ENCODE measurements at regions of chr10 and their contacts with region 1.

Region 1: GRCh38 chr10:4849555-4850242 is 23.7 kb downstream of the AKR1E2 start:
- DNase-seq: peak; percentile 98
- H3K4me3 ChIP-seq: no peak overlapping the region
- H3K27ac ChIP-seq: no peak overlapping the region
- H3K4me1 ChIP-seq: peaks cover 22% of the 10 kb centered on the region
- H3K27me3 ChIP-seq: no peaks in the 10 kb centered on the region
- CTCF ChIP-seq: peak; percentile 95 to 100
- POLR2A ChIP-seq: no peak

Region 2: GRCh38 chr10:4541292-4541691 is 308.4 kb before region 1 on chr10:
- CTCF ChIA-PET with region 1: no interaction called
- POLR2A ChIA-PET with region 1: no interaction called
- dilution Hi-C with region 1: no loop called
- intact Hi-C with region 1: no loop called
- DNase-seq: peak; percentile 94
- H3K4me3 ChIP-seq: no peak overlapping the region
- H3K27ac ChIP-seq: peak overlapping the region; percentile 93
- H3K4me1 ChIP-seq: peaks cover 10% of the 10 kb centered on the region
- H3K27me3 ChIP-seq: no peaks in the 10 kb centered on the region
- CTCF ChIP-seq: peak in 1 of 2 donors; percentile 18
- POLR2A ChIP-seq: no peak

Region 3: GRCh38 chr10:4813023-4813422 is 36.7 kb before region 1 on chr10:
- CTCF ChIA-PET with region 1: interaction called, 17 read pairs
- POLR2A ChIA-PET with region 1: no interaction called
- dilution Hi-C with region 1: no loop called
- intact Hi-C with region 1: loop called (anchors 1 kb)
- DNase-seq: peak; percentile 22
- H3K4me3 ChIP-seq: no peak overlapping the region
- H3K27ac ChIP-seq: no peak overlapping the region
- H3K4me1 ChIP-seq: peaks cover 31% of the 10 kb centered on the region
- H3K27me3 ChIP-seq: peaks cover 0 to 2% of the 10 kb centered on the region in 2 experiments
- CTCF ChIP-seq: no peak
- POLR2A ChIP-seq: no peak

Region 4: GRCh38 chr10:4889959-4890358 is 40.3 kb after region 1 on chr10:
- CTCF ChIA-PET with region 1: interaction called, 10 read pairs
- POLR2A ChIA-PET with region 1: no interaction called
- dilution Hi-C with region 1: no loop called
- intact Hi-C with region 1: no loop called
- DNase-seq: no peak
- H3K4me3 ChIP-seq: no peak overlapping the region
- H3K27ac ChIP-seq: no peak overlapping the region
- H3K4me1 ChIP-seq: no peaks in the 10 kb centered on the region
- H3K27me3 ChIP-seq: no peaks in the 10 kb centered on the region
- CTCF ChIP-seq: no peak
- POLR2A ChIP-seq: no peak

Region 5: GRCh38 chr10:5094265-5095205 is 244.8 kb after region 1 on chr10 and contains the start of gene AKR1C3:
- CTCF ChIA-PET with region 1: interaction called, 83 read pairs
- POLR2A ChIA-PET with region 1: no interaction called
- dilution Hi-C with region 1: no loop called
- intact Hi-C with region 1: loop called (anchors 1 kb)
- DNase-seq: peak; percentile 83
- H3K4me3 ChIP-seq: peak within 1 kb of the TSS; percentile 52 to 87 (median 56)
- H3K27ac ChIP-seq: peak within 1 kb of the TSS; percentile 28
- H3K4me1 ChIP-seq: peaks cover 7% of the 10 kb centered on the region
- H3K27me3 ChIP-seq: no peaks in the 10 kb centered on the region
- CTCF ChIP-seq: peak; percentile 43 to 53
- POLR2A ChIP-seq: no peak
- total RNA-seq, gene AKR1C3: 4.8 and 32.2 TPM in 2 replicates

Region 6: DNA sequence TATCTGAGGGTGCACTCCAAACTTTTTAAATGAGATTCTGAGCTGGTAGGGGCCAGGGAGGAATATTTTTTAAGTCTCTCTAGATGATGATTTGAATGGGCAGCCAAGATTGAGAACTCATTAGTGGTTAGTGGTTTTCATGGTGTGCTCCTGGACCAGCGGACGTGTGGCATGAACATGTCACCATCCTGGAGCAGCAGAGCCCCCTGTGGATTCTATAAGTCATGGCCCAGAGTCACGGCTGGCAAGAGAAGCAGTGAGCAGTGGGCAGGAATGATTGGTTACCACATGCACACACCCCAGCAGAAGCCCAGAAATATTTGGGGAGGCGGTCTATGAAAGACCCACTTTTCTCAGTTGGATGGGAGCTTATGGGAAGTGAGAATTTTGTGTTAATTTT is 493.9 kb after region 1 on chr10:
- CTCF ChIA-PET with region 1: interaction called, 13 read pairs
- POLR2A ChIA-PET with region 1: no interaction called
- dilution Hi-C with region 1: no loop called
- intact Hi-C with region 1: loop called (anchors 1 kb)
- DNase-seq: no peak
- H3K4me3 ChIP-seq: no peak overlapping the region
- H3K27ac ChIP-seq: no peak overlapping the region
- H3K4me1 ChIP-seq: no peaks in the 10 kb centered on the region
- H3K27me3 ChIP-seq: no peaks in the 10 kb centered on the region
- CTCF ChIP-seq: no peak
- POLR2A ChIP-seq: no peak

Region 7: GRCh38 chr10:5434017-5434753 is 584.5 kb after region 1 on chr10:
- CTCF ChIA-PET with region 1: interaction called, 97 read pairs
- POLR2A ChIA-PET with region 1: no interaction called
- dilution Hi-C with region 1: no loop called
- intact Hi-C with region 1: loop called (anchors 1 kb)
- DNase-seq: peak; percentile 67
- H3K4me3 ChIP-seq: no peak overlapping the region
- H3K27ac ChIP-seq: no peak overlapping the region
- H3K4me1 ChIP-seq: no peaks in the 10 kb centered on the region
- H3K27me3 ChIP-seq: no peaks in the 10 kb centered on the region
- CTCF ChIP-seq: peak; percentile 42 to 50
- POLR2A ChIP-seq: no peak

Measured in endothelial cell of umbilical vein (primary cell).